Gastrocnemius medialis (tissue), 4 donors: ENCODE measurements at regions of chr7 and their contacts with region 1.

Region 1: GRCh38 chr7:9870674-9871073 is 1103.0 kb upstream of the PHF14 start:
- DNase-seq: no peak
- ATAC-seq: no peak
- H3K4me3 ChIP-seq: no peak overlapping the region
- H3K27ac ChIP-seq: no peak overlapping the region
- H3K4me1 ChIP-seq: no peaks in the 10 kb centered on the region
- H3K27me3 ChIP-seq: no peaks in the 10 kb centered on the region
- CTCF ChIP-seq: no peak
- POLR2A ChIP-seq: no peak

Region 2: GRCh38 chr7:9796241-9796640 is 74.4 kb before region 1 on chr7:
- in situ Hi-C with region 1: loop called in 1 of 4 experiments (anchors 10 kb)
- intact Hi-C with region 1: no loop called
- DNase-seq: no peak
- ATAC-seq: no peak
- H3K4me3 ChIP-seq: no peak overlapping the region
- H3K27ac ChIP-seq: no peak overlapping the region
- H3K4me1 ChIP-seq: no peaks in the 10 kb centered on the region
- H3K27me3 ChIP-seq: no peaks in the 10 kb centered on the region
- CTCF ChIP-seq: no peak
- POLR2A ChIP-seq: no peak